OCI-LY7 (cell line): ENCODE measurements at regions of chr19 and their contacts with region 1.

Region 1: GRCh38 chr19:11453468-11454341 is 18.3 kb downstream of the PRKCSH start:
- DNase-seq: peak; percentile 44
- H3K4me3 ChIP-seq: no peak overlapping the region
- H3K27ac ChIP-seq: no peak overlapping the region
- H3K4me1 ChIP-seq: peaks cover 12% of the 10 kb centered on the region
- CTCF ChIP-seq: peak; percentile 87

Region 2: GRCh38 chr19:11482384-11483050 is 28.8 kb after region 1 on chr19:
- CTCF ChIA-PET with region 1: interaction called, 6 read pairs
- POLR2A ChIA-PET with region 1: no interaction called
- intact Hi-C with region 1: loop called (anchors 2 kb)
- DNase-seq: peak; percentile 95
- H3K4me3 ChIP-seq: peak overlapping the region; percentile 65
- H3K27ac ChIP-seq: peak overlapping the region; percentile 65
- H3K4me1 ChIP-seq: peaks cover 23% of the 10 kb centered on the region
- CTCF ChIP-seq: peak; percentile 89